ENCODE measurements at regions of chr3 and their contacts with region 1.

Region 1: DNA sequence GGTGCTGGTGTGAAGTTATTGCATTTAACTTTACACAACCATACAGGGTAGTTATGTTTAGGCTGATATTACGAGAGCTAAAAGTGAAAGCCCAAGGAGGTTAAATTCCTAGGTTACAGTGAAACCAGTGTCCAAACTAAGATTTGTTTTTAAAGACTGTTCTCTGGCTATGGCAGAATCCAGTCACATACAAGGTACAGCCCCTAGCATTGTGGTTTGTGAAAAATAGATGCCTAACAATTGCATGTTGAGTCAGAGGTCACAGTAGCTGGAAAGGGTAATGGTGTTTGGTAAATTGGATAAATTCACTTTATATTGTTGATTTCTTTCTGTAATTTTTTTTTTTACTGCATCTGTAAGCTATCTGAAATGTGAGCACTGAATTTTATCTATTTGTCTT is 614.6 kb upstream of the TBL1XR1 start:
- DNase-seq: no peak
- ATAC-seq: no peak
- H3K4me3 ChIP-seq: no peak overlapping the region
- H3K27ac ChIP-seq: no peak overlapping the region
- H3K4me1 ChIP-seq: peaks cover 4% of the 10 kb centered on the region; the same call in 1 of the 2 replicates
- H3K27me3 ChIP-seq: no peaks in the 10 kb centered on the region
- CTCF ChIP-seq: no peak
- POLR2A ChIP-seq: no peak
- RAD21 ChIP-seq: no peak

Region 2: GRCh38 chr3:176759815-176760506 is 1051.9 kb before region 1 on chr3:
- CTCF ChIA-PET with region 1: no interaction called
- POLR2A ChIA-PET with region 1: no interaction called
- dilution Hi-C with region 1: no loop called
- in situ Hi-C with region 1: no loop called
- intact Hi-C with region 1: no loop called
- DNase-seq: no peak
- ATAC-seq: no peak
- H3K4me3 ChIP-seq: no peak overlapping the region
- H3K27ac ChIP-seq: no peak overlapping the region
- H3K4me1 ChIP-seq: no peaks in the 10 kb centered on the region
- H3K27me3 ChIP-seq: no peaks in the 10 kb centered on the region
- CTCF ChIP-seq: no peak
- POLR2A ChIP-seq: no peak
- RAD21 ChIP-seq: no peak

Region 3: DNA sequence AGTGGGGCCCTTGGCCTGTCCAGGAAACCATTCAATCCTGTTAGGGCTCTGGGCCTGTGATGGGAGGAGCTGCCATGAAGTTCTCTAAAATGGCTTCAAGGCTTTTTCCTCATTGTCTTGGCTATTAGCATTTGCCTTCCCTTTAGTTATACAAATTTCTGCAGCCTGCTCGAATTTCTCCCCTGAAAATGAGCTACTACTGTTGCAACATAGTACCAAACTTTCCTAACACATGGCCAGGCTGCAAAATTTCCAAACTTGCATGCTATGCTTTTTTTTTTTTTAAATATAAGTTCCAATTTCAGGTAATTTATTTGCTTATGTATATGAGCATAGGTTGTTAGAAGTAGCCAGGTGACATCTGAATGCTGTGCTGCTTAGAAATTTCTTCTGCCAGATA is 53.7 kb before region 1 on chr3:
- CTCF ChIA-PET with region 1: interaction called, 11 read pairs
- POLR2A ChIA-PET with region 1: no interaction called
- dilution Hi-C with region 1: no loop called
- in situ Hi-C with region 1: no loop called
- intact Hi-C with region 1: no loop called
- DNase-seq: peak; percentile 37
- ATAC-seq: no peak
- H3K4me3 ChIP-seq: no peak overlapping the region
- H3K27ac ChIP-seq: peak overlapping the region; percentile 94; the same call in 1 of the 2 replicates
- H3K4me1 ChIP-seq: peaks cover 13% of the 10 kb centered on the region
- H3K27me3 ChIP-seq: no peaks in the 10 kb centered on the region
- CTCF ChIP-seq: no peak
- POLR2A ChIP-seq: no peak
- RAD21 ChIP-seq: no peak